Heart right ventricle (tissue), 16 donors: ENCODE measurements at regions of chr18 and their contacts with region 1.

Region 1: DNA sequence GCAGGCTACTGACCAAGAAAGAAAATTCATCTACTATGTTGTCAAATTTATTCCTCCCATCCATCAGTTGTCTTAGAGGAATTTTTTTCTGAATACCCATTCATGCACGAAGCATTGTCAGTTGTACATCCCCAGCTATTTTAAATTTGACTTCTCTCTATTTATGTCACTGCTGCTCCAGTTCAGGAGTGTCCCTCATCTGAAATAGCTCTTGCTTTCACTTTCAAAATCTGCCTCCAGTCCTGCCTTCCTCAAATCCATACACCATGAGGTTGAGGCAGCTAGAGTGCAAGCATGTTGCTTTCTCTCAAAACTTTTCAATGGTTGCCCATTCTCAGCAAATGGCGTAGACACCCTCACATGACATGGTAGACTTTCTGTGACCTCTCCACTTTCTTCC is 335.4 kb upstream of the CDH2 start:
- DNase-seq: no peak
- ATAC-seq: peak in 3 of 8 donors; percentile 46 to 58 (median 47)
- H3K4me3 ChIP-seq: peak overlapping the region in 6 of 10 donors; percentile 20 to 35 (median 28)
- H3K27ac ChIP-seq: no peak overlapping the region
- H3K4me1 ChIP-seq: no peaks in the 10 kb centered on the region
- H3K27me3 ChIP-seq: no peaks in the 10 kb centered on the region
- CTCF ChIP-seq: no peak

Region 2: DNA sequence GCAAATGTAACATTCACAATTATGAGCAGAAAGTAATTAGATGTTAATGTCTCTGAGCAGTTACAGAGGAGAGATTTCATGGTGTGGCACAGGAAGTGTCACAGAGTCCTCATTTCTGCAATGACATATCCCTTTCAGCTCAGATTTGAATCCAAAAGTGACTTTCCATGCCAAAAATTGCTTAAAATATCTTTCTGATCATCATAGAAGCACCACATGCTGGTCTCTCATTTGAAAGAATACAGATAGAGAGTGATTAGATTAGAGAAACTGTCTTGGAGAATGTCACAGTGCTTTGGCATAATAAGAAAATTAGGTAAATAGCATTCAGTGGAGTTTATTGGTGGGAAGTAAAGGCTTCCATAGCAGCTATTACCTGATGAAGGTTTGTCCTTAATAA is 48.0 kb after region 1 on chr18:
- intact Hi-C with region 1: loop called in 1 of 10 experiments (anchors 5 kb)
- DNase-seq: no peak
- ATAC-seq: no peak
- H3K4me3 ChIP-seq: no peak overlapping the region
- H3K27ac ChIP-seq: no peak overlapping the region
- H3K4me1 ChIP-seq: no peaks in the 10 kb centered on the region
- H3K27me3 ChIP-seq: no peaks in the 10 kb centered on the region
- CTCF ChIP-seq: no peak